Ascending aorta (tissue), 2 donors: ENCODE measurements at regions of chr5 and their contacts with region 1.

Region 1: GRCh38 chr5:60382716-60383115 is 317.2 kb downstream of the DEPDC1B start:
- DNase-seq: no peak
- H3K4me3 ChIP-seq: no peak overlapping the region
- H3K27ac ChIP-seq: peak overlapping the region; percentile 68 to 69
- H3K4me1 ChIP-seq: peaks cover 7 to 28% of the 10 kb centered on the region in 2 donors
- H3K27me3 ChIP-seq: no peaks in the 10 kb centered on the region
- CTCF ChIP-seq: peak in 2 of 3 experiments; percentile 53 to 58

Region 2: GRCh38 chr5:60092671-60093422 is 289.9 kb before region 1 on chr5:
- intact Hi-C with region 1: loop called (anchors 10 kb)
- DNase-seq: peak in 1 of 2 donors; percentile 65
- H3K4me3 ChIP-seq: no peak overlapping the region
- H3K27ac ChIP-seq: peak overlapping the region in 1 of 2 donors; percentile 6
- H3K4me1 ChIP-seq: no peaks in the 10 kb centered on the region
- H3K27me3 ChIP-seq: no peaks in the 10 kb centered on the region
- CTCF ChIP-seq: no peak

Region 3: DNA sequence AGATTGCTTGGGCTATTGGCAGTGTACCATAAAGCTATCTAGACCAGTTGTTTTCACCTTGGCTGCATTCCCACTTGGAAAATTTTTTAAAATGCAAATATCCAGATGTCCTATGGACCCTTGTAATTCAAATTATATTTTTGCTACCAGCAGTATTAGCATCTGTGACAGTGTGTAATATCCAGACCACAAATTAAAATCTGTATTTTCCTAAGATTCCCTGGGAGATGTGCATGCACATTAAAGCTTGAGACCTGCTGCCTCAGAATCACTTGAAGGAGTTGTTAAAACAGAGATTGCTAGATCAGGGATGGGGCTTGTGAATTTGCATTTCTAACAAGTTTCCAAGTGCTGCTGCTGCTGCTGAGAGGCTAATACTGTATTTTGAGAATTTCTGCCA is 108.0 kb before region 1 on chr5:
- intact Hi-C with region 1: loop called (anchors 5 kb)
- DNase-seq: no peak
- H3K4me3 ChIP-seq: no peak overlapping the region
- H3K27ac ChIP-seq: peak overlapping the region; percentile 12 to 68
- H3K4me1 ChIP-seq: peaks cover 6 to 25% of the 10 kb centered on the region in 2 donors
- H3K27me3 ChIP-seq: no peaks in the 10 kb centered on the region
- CTCF ChIP-seq: no peak

Region 4: GRCh38 chr5:60339691-60340191 is 43.0 kb before region 1 on chr5:
- intact Hi-C with region 1: loop called (anchors 5 kb)
- DNase-seq: peak in 1 of 2 donors; percentile 70
- H3K4me3 ChIP-seq: peak overlapping the region in 1 of 2 donors; percentile 18
- H3K27ac ChIP-seq: peak overlapping the region; percentile 74
- H3K4me1 ChIP-seq: peaks cover 6 to 31% of the 10 kb centered on the region in 2 donors
- H3K27me3 ChIP-seq: no peaks in the 10 kb centered on the region
- CTCF ChIP-seq: no peak

Region 5: GRCh38 chr5:60473654-60474053 is 90.9 kb after region 1 on chr5:
- intact Hi-C with region 1: loop called (anchors 5 kb)
- DNase-seq: no peak
- H3K4me3 ChIP-seq: no peak overlapping the region
- H3K27ac ChIP-seq: peak overlapping the region in 1 of 2 donors; percentile 24
- H3K4me1 ChIP-seq: peaks cover 0 to 8% of the 10 kb centered on the region in 2 donors
- H3K27me3 ChIP-seq: no peaks in the 10 kb centered on the region
- CTCF ChIP-seq: no peak

Region 6: DNA sequence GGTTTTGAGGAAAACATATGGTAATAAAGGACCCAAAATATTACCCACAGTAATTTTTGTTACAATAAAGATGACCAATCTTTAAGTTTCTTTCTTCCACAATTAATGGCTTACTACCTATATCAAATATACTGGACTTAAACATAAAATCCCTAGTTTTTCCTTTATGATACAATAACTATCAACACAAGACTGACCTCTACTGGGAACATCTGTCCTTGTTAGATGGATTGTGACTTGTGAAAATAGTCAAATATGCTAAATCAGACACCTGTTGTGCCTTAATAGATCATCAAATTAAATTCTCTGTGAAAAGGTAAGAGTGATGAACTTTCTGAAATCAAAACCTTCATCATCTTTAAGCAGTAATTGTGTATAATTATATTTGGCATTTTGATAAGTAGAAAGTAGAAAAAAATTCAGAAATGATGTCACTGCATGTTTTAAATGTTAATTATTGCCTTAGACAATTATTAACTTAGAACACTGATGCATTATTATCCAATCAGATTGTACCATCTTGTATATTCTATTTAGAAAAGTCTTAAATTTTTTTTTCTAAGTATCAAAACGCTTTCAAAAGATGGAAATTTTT is 203.7 kb after region 1 on chr5:
- intact Hi-C with region 1: loop called (anchors 1 kb)
- DNase-seq: no peak
- H3K4me3 ChIP-seq: no peak overlapping the region
- H3K27ac ChIP-seq: no peak overlapping the region
- H3K4me1 ChIP-seq: no peaks in the 10 kb centered on the region
- H3K27me3 ChIP-seq: no peaks in the 10 kb centered on the region
- CTCF ChIP-seq: peak; percentile 6 to 57 (median 54)

Region 7: DNA sequence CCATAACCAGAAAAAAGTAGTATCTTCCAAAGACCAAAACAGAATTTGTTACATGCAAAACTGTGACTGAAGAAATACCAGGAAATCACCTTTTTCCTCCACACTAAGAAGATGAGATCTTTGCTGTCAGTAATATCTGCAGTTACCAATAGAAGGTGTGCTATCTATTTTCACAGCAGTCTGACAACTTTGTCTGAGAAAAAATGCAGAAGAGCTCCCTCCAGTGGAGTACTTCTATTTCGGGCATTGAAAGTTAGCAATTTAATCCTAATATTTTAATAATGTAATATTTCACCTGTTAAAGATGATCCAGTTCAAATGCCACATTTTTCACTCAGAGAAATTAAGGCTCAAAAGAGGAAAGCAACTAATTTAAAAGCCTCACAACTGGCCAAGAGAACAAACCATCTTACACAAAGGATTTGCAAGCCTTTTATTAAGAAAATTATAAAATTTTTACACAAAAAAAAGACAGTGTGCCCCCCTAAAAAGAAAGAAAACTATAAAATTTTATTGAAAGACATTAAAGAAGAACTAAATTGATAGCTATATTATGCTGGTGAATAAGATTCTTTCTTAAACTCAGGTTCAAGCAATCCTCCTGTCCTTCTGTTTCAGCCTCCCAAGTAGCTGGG is 266.7 kb after region 1 on chr5:
- intact Hi-C with region 1: loop called (anchors 10 kb)
- DNase-seq: no peak
- H3K4me3 ChIP-seq: no peak overlapping the region
- H3K27ac ChIP-seq: no peak overlapping the region
- H3K4me1 ChIP-seq: no peaks in the 10 kb centered on the region
- H3K27me3 ChIP-seq: no peaks in the 10 kb centered on the region
- CTCF ChIP-seq: peak; percentile 7 to 62 (median 49)

Region 8: DNA sequence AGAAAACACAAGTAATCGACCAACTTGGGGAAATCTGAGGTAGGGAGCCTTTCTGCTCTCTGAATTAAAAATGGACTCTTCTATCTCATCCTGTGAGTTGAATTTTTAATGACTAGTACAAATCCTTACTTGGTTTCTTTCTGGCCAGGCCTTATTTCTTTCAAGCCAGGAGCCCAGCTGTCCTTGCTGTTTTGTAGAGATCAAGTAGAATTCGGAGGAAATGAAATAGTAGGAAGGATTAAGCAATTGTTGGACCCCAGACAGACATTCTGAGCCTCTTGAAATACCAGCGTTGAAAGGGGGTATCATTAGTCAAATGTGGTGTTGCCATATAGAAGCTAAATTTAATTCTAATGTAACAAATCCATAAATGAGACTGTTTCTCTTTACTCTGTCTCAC is 833.3 kb after region 1 on chr5:
- intact Hi-C with region 1: no loop called
- DNase-seq: no peak
- H3K4me3 ChIP-seq: no peak overlapping the region
- H3K27ac ChIP-seq: no peak overlapping the region
- H3K4me1 ChIP-seq: no peaks in the 10 kb centered on the region
- H3K27me3 ChIP-seq: no peaks in the 10 kb centered on the region
- CTCF ChIP-seq: no peak